ENCODE measurements at regions of chr3 and their contacts with region 1.

Region 1: GRCh38 chr3:190321789-190322603 is at the start of gene CLDN1:
- DNase-seq: peak; percentile 64 to 90
- H3K4me3 ChIP-seq: peak within 1 kb of the TSS; percentile 85
- H3K27ac ChIP-seq: peak within 1 kb of the TSS; percentile 62
- H3K4me1 ChIP-seq: peaks cover 39% of the 10 kb centered on the region
- H3K27me3 ChIP-seq: no peaks in the 10 kb centered on the region
- CTCF ChIP-seq: peak; percentile 98
- total RNA-seq, gene CLDN1: 25.9 and 27.1 TPM in 2 replicates

Region 2: GRCh38 chr3:190017521-190018288 is 304.3 kb before region 1 on chr3:
- CTCF ChIA-PET with region 1: no interaction called
- POLR2A ChIA-PET with region 1: no interaction called
- intact Hi-C with region 1: loop called (anchors 5 kb)
- DNase-seq: peak; percentile 55 to 65
- H3K4me3 ChIP-seq: no peak overlapping the region
- H3K27ac ChIP-seq: no peak overlapping the region
- H3K4me1 ChIP-seq: peaks cover 24% of the 10 kb centered on the region
- H3K27me3 ChIP-seq: no peaks in the 10 kb centered on the region
- CTCF ChIP-seq: peak; percentile 49; the same call in 1 of the 2 replicates

Region 3: DNA sequence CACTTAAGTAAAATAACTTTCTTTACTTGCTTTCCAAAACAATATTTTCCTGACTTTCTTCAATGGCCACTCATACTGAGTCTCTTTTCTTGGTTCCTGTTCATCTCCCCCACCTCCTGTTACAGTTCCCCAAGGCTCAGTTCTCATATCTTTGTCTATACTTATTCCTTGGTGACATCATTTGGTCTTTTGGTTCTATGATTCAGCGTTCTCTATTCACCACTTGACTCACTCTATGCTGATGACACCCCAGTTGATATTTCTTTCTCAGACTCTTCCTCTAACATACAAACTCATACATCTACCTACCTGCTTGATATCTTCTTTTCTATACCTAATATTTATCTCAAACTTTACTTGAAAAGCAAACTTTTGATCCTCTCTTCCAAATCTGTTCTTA is 116.3 kb before region 1 on chr3:
- CTCF ChIA-PET with region 1: no interaction called
- POLR2A ChIA-PET with region 1: no interaction called
- intact Hi-C with region 1: loop called (anchors 5 kb)
- DNase-seq: no peak
- H3K4me3 ChIP-seq: no peak overlapping the region
- H3K27ac ChIP-seq: no peak overlapping the region
- H3K4me1 ChIP-seq: peaks cover 4% of the 10 kb centered on the region; the same call in 1 of the 2 replicates
- H3K27me3 ChIP-seq: no peaks in the 10 kb centered on the region
- CTCF ChIP-seq: no peak

Region 4: DNA sequence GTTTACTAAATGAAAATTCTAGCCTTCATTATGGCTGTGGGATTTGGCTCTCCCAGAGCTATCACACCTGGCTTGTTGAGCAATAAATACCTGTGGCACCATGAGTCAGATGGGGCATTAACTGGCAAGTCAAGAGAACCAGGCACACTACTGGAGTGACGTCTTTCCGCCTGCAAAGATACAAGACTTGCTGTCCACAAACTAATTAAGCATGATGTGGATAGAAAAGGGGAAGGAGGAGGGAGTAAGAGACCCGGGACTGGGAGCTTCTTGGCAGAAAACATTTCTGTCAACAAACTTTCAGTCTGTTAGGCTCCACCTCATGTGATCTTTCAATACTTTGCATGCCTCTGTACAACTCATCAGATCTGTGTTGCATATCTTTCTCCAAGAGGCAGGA is 56.2 kb before region 1 on chr3:
- CTCF ChIA-PET with region 1: no interaction called
- POLR2A ChIA-PET with region 1: no interaction called
- intact Hi-C with region 1: loop called (anchors 1 kb)
- DNase-seq: peak; percentile 79 to 97
- H3K4me3 ChIP-seq: no peak overlapping the region
- H3K27ac ChIP-seq: peak overlapping the region; percentile 62
- H3K4me1 ChIP-seq: peaks cover 22% of the 10 kb centered on the region
- H3K27me3 ChIP-seq: no peaks in the 10 kb centered on the region
- CTCF ChIP-seq: no peak

Region 5: GRCh38 chr3:190424478-190425439 is 102.8 kb after region 1 on chr3:
- CTCF ChIA-PET with region 1: interaction called, 6 read pairs
- POLR2A ChIA-PET with region 1: interaction called, 3 read pairs
- intact Hi-C with region 1: loop called (anchors 1 kb)
- DNase-seq: peak; percentile 70 to 73
- H3K4me3 ChIP-seq: no peak overlapping the region
- H3K27ac ChIP-seq: no peak overlapping the region
- H3K4me1 ChIP-seq: no peaks in the 10 kb centered on the region
- H3K27me3 ChIP-seq: no peaks in the 10 kb centered on the region
- CTCF ChIP-seq: peak; percentile 95

Region 6: DNA sequence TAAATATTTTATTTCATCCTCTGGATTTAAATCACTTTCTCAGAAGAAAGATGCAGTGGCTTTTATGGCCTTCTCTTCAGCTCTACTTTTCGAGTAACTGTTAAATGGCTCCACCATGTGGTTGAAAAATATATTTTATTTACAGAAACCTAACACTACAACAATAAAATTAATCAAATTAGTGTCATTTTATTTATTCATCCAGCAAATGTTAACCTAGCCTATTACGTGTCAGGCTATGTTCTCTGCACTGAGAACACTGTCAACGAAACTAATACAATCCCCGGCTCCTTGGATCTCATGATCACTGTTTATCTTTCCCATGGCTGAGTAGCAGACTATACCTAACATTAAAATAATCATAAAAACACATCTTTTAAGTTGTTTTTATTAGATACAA is 729.0 kb after region 1 on chr3:
- CTCF ChIA-PET with region 1: no interaction called
- POLR2A ChIA-PET with region 1: interaction called, 4 read pairs
- intact Hi-C with region 1: loop called (anchors 5 kb)
- DNase-seq: peak in 1 of 2 experiments; percentile 58
- H3K4me3 ChIP-seq: no peak overlapping the region
- H3K27ac ChIP-seq: no peak overlapping the region
- H3K4me1 ChIP-seq: no peaks in the 10 kb centered on the region
- H3K27me3 ChIP-seq: no peaks in the 10 kb centered on the region
- CTCF ChIP-seq: peak; percentile 87